ENCODE measurements at regions of chr9 and their contacts with region 1.

Region 1: DNA sequence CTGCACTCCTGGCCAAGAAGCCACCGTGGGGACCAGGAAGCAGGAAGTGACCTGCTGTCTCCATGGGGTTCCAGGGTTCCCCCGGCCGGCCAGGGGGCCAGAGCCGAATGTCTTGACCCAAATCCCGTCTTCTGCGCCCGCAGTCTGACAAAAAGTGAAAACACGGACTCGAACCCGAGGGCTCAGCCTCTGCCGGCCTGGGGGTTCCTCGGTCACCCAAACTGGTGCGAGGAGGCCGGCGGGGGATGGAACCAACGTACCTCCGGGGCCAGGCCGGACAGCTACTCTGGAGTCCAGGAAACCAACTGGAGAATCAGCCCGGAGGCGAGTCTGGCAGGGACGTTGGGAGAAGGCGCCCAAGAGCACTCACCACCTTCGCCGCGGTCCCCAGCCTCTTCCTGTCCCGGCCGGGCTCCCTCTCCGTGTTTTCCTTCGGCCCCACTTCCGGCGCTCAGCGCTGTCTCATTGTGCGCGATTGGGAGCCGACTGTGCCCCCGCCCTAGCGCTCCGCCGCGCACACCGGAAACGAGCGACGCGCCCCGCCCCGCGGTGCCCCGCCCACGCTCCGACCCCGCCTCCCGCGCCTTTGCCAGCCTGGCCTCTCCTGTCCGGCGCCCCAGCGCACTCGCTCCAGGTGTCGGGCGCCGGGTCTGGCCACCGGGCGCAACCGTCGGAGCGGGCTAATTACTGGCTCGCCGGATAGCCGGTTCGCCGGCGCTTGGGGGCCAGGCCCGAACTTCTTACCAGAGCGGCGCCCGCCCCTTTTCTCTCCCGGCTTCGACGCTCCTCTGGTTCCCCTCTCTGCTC is at the start of gene TUT7:
- DNase-seq: peak; percentile 95
- H3K4me3 Mint-ChIP-seq: peak within 1 kb of the TSS; percentile 94
- H3K27ac Mint-ChIP-seq: peak within 1 kb of the TSS; percentile 98
- H3K4me1 Mint-ChIP-seq: peaks cover 26% of the 10 kb centered on the region
- H3K27me3 Mint-ChIP-seq: no peaks in the 10 kb centered on the region
- total RNA-seq, gene TUT7: 41.5 and 41.9 TPM in 2 replicates

Region 2: GRCh38 chr9:85940832-85941621 is 413.2 kb before region 1 on chr9 and contains the start of gene NAA35:
- intact Hi-C with region 1: loop called (anchors 1 kb)
- DNase-seq: peak; percentile 99
- H3K4me3 Mint-ChIP-seq: no peak within 1 kb of the TSS
- H3K27ac Mint-ChIP-seq: peak within 1 kb of the TSS; percentile 93
- H3K4me1 Mint-ChIP-seq: peaks cover 7% of the 10 kb centered on the region
- H3K27me3 Mint-ChIP-seq: no peaks in the 10 kb centered on the region
- total RNA-seq, gene NAA35: 31.3 and 33.6 TPM in 2 replicates

Region 3: GRCh38 chr9:86257391-86257790 is 96.8 kb before region 1 on chr9:
- intact Hi-C with region 1: no loop called
- DNase-seq: no peak
- H3K4me3 Mint-ChIP-seq: no peak overlapping the region
- H3K27ac Mint-ChIP-seq: no peak overlapping the region
- H3K4me1 Mint-ChIP-seq: no peaks in the 10 kb centered on the region
- H3K27me3 Mint-ChIP-seq: no peaks in the 10 kb centered on the region

Region 4: GRCh38 chr9:86282077-86282978 is 71.9 kb before region 1 on chr9 and contains the start of gene ISCA1:
- intact Hi-C with region 1: loop called (anchors 1 kb)
- DNase-seq: peak; percentile 92
- H3K4me3 Mint-ChIP-seq: peak within 1 kb of the TSS; percentile 95
- H3K27ac Mint-ChIP-seq: peak within 1 kb of the TSS; percentile 99
- H3K4me1 Mint-ChIP-seq: peaks cover 36% of the 10 kb centered on the region
- H3K27me3 Mint-ChIP-seq: no peaks in the 10 kb centered on the region
- total RNA-seq, gene ISCA1: 28.5 and 28.9 TPM in 2 replicates

Region 5: GRCh38 chr9:86341006-86341491 is 13.2 kb before region 1 on chr9:
- intact Hi-C with region 1: loop called (anchors 1 kb)
- DNase-seq: no peak
- H3K4me3 Mint-ChIP-seq: no peak overlapping the region
- H3K27ac Mint-ChIP-seq: peak overlapping the region; percentile 31
- H3K4me1 Mint-ChIP-seq: peaks cover 48% of the 10 kb centered on the region
- H3K27me3 Mint-ChIP-seq: no peaks in the 10 kb centered on the region

Region 6: GRCh38 chr9:86368871-86369521 is 14.8 kb after region 1 on chr9:
- intact Hi-C with region 1: no loop called
- DNase-seq: no peak
- H3K4me3 Mint-ChIP-seq: no peak overlapping the region
- H3K27ac Mint-ChIP-seq: no peak overlapping the region
- H3K4me1 Mint-ChIP-seq: no peaks in the 10 kb centered on the region
- H3K27me3 Mint-ChIP-seq: peaks cover 17% of the 10 kb centered on the region